K562 (cell line): ENCODE measurements at regions of chr22 and their contacts with region 1.

Region 1: GRCh38 chr22:38569972-38570778 is at the start of gene DMC1:
- DNase-seq: peak; percentile 94 to 99 (median 98)
- ATAC-seq: peak; percentile 94
- H3K4me3 ChIP-seq: peak within 1 kb of the TSS; percentile 51
- H3K27ac ChIP-seq: peak within 1 kb of the TSS; percentile 94
- H3K4me1 ChIP-seq: peaks cover 4 to 8% of the 10 kb centered on the region in 2 experiments; a peak in 4 of 5 replicates
- H3K27me3 ChIP-seq: no peaks in the 10 kb centered on the region
- CTCF ChIP-seq: no peak
- EP300 ChIP-seq: no peak
- POLR2A ChIP-seq: peak; percentile 81
- RAD21 ChIP-seq: no peak
- polyA plus RNA-seq, gene DMC1: 8.4 to 8.7 TPM

Region 2: DNA sequence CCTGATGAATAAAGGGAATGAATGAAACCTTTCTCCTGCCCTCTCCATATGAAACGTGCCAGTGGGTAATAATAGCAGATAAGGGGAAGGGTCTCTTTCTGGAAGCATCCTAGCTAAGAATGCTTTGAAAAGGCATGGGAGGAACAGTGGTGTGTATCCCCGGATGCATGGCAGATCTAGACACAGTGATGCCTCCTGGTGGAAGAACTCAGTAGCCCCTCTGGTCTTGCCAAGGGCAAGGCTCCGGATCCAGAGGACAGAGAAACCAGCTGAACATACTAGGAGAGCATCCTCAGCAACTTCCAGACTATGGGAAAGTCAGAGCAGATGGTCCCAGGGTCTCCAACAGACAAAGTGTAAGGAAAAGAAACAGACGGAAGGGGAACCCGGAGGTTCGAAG is 466.1 kb before region 1 on chr22:
- CTCF ChIA-PET with region 1: no interaction called
- POLR2A ChIA-PET with region 1: no interaction called
- in situ Hi-C with region 1: loop called (anchors 10 kb)
- intact Hi-C with region 1: loop called (anchors 10 kb)
- DNase-seq: peak; percentile 43 to 50 (median 46)
- ATAC-seq: peak; percentile 86
- H3K4me3 ChIP-seq: no peak overlapping the region
- H3K27ac ChIP-seq: no peak overlapping the region
- H3K4me1 ChIP-seq: peaks cover 0 to 9% of the 10 kb centered on the region in 2 experiments; a peak in 4 of 5 replicates
- H3K27me3 ChIP-seq: no peaks in the 10 kb centered on the region
- CTCF ChIP-seq: peak; percentile 45 to 54 (median 48)
- EP300 ChIP-seq: no peak
- POLR2A ChIP-seq: no peak
- RAD21 ChIP-seq: peak in 1 of 2 experiments; percentile 40; a peak in 2 of 4 replicates

Region 3: GRCh38 chr22:38143036-38143697 is 427.0 kb before region 1 on chr22:
- CTCF ChIA-PET with region 1: no interaction called
- POLR2A ChIA-PET with region 1: no interaction called
- in situ Hi-C with region 1: no loop called
- intact Hi-C with region 1: no loop called
- DNase-seq: peak in 2 of 4 experiments; percentile 72 to 83
- ATAC-seq: peak; percentile 85
- H3K4me3 ChIP-seq: no peak overlapping the region
- H3K27ac ChIP-seq: peak overlapping the region; percentile 66
- H3K4me1 ChIP-seq: peaks cover 26 to 32% of the 10 kb centered on the region in 2 experiments; a peak in 4 of 5 replicates
- H3K27me3 ChIP-seq: no peaks in the 10 kb centered on the region
- CTCF ChIP-seq: no peak
- EP300 ChIP-seq: peak; percentile 85
- POLR2A ChIP-seq: no peak
- RAD21 ChIP-seq: no peak; a peak in 1 of 4 replicates

Region 4: DNA sequence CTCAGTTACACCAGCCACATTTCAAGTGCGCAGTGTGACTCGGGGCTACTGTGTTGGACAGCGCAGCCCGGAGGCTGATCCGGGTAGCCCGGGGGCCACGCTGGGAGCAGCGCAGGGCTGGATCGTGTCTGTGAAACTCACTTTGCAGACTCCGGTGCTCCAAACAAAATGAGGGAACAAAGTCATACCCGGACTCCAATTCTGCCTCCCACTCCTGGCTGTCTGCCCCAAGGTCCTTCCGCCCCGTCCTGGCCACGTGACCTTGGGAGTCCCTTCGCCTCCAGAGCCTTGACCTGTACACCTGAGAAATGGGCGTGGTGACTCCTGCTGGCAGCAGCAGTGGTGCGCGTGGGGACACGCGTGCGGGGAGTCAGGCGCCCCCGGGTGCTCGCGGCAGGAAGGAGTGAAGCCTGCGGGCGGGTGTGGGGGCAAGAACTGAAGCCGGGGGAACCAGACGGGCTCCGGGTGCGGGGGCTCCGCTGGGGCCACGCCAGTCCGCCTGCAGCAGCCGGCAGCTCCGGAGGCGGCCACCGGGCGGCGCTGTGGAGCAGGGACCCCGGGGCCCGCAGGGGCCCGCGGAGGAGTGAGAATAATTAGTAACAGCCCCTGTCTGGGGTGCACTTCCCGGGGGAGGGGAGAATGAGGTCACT is 157.6 kb before region 1 on chr22:
- CTCF ChIA-PET with region 1: no interaction called
- POLR2A ChIA-PET with region 1: no interaction called
- in situ Hi-C with region 1: no loop called
- intact Hi-C with region 1: loop called (anchors 5 kb)
- DNase-seq: peak; percentile 50 to 84 (median 83)
- ATAC-seq: peak; percentile 93
- H3K4me3 ChIP-seq: peak overlapping the region; percentile 27
- H3K27ac ChIP-seq: no peak overlapping the region
- H3K4me1 ChIP-seq: peaks cover 0 to 15% of the 10 kb centered on the region in 2 experiments; a peak in 2 of 5 replicates
- H3K27me3 ChIP-seq: no peaks in the 10 kb centered on the region
- CTCF ChIP-seq: peak; percentile 66 to 81 (median 79)
- EP300 ChIP-seq: no peak
- POLR2A ChIP-seq: no peak
- RAD21 ChIP-seq: peak in 1 of 2 experiments; percentile 61; a peak in 3 of 4 replicates

Region 5: GRCh38 chr22:38490915-38491314 is 79.3 kb before region 1 on chr22:
- CTCF ChIA-PET with region 1: no interaction called
- POLR2A ChIA-PET with region 1: no interaction called
- in situ Hi-C with region 1: loop called (anchors 5 kb)
- intact Hi-C with region 1: no loop called
- DNase-seq: no peak
- ATAC-seq: peak; percentile 63
- H3K4me3 ChIP-seq: no peak overlapping the region
- H3K27ac ChIP-seq: peak overlapping the region; percentile 53; the same call in 1 of the 3 replicates
- H3K4me1 ChIP-seq: no peaks in the 10 kb centered on the region
- H3K27me3 ChIP-seq: no peaks in the 10 kb centered on the region
- CTCF ChIP-seq: no peak
- EP300 ChIP-seq: no peak
- POLR2A ChIP-seq: no peak
- RAD21 ChIP-seq: no peak

Region 6: DNA sequence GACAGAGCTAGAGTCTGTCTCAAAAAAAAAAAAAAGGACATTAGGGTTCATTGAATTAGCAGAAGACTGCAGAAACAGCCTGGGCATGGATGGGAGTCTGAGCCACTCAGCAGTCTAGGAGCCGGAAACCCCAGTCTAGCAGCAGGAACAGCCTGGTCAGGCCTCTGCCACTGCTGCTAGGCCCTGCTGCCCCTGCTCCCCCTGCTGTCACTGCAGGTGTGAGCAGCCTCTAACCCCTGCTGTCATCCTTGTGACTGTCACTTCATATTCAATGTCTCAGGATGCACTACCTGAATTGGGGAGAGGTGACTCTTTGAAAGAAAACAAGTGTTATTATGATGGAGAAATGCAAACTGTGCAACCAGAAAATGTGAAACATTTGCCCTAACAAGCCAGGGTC is 57.1 kb before region 1 on chr22:
- CTCF ChIA-PET with region 1: interaction called, 5 read pairs
- POLR2A ChIA-PET with region 1: no interaction called
- in situ Hi-C with region 1: no loop called
- intact Hi-C with region 1: loop called (anchors 5 kb)
- DNase-seq: peak; percentile 29 to 63 (median 46)
- ATAC-seq: peak; percentile 89
- H3K4me3 ChIP-seq: no peak overlapping the region
- H3K27ac ChIP-seq: no peak overlapping the region; the same call in 2 of the 3 replicates
- H3K4me1 ChIP-seq: peaks cover 21 to 35% of the 10 kb centered on the region in 2 experiments; a peak in 4 of 5 replicates
- H3K27me3 ChIP-seq: no peaks in the 10 kb centered on the region
- CTCF ChIP-seq: peak; percentile 45 to 64 (median 61)
- EP300 ChIP-seq: no peak
- POLR2A ChIP-seq: no peak
- RAD21 ChIP-seq: peak in 1 of 2 experiments; percentile 38; a peak in 2 of 4 replicates

Region 7: GRCh38 chr22:38549495-38549894 is 20.7 kb before region 1 on chr22:
- CTCF ChIA-PET with region 1: no interaction called
- POLR2A ChIA-PET with region 1: no interaction called
- in situ Hi-C with region 1: no loop called
- intact Hi-C with region 1: no loop called
- DNase-seq: no peak
- ATAC-seq: no peak
- H3K4me3 ChIP-seq: no peak overlapping the region
- H3K27ac ChIP-seq: no peak overlapping the region
- H3K4me1 ChIP-seq: no peaks in the 10 kb centered on the region
- H3K27me3 ChIP-seq: no peaks in the 10 kb centered on the region
- CTCF ChIP-seq: no peak
- EP300 ChIP-seq: no peak
- POLR2A ChIP-seq: no peak
- RAD21 ChIP-seq: no peak

Region 8: DNA sequence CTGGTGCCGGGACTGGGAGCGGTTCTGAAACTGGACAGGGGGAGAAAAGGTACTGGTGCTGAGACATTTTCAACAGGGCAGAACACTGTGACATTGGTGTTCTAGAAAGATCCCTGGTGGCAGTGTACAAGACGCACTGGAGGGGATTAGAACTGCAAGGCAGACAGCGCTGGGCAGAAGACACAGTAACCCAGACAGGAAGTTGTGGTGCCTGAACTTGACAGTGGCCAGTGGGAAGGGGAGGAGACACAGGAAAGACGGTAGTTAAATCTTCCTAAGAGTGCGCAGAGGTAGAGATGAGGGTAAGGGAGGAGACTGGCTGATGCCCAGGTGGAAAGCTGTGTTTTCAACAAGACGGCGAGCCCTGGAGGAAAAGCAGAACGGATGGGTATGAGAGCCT is 61.5 kb after region 1 on chr22:
- CTCF ChIA-PET with region 1: no interaction called
- POLR2A ChIA-PET with region 1: no interaction called
- in situ Hi-C with region 1: no loop called
- intact Hi-C with region 1: no loop called
- DNase-seq: no peak
- ATAC-seq: no peak
- H3K4me3 ChIP-seq: no peak overlapping the region
- H3K27ac ChIP-seq: no peak overlapping the region
- H3K4me1 ChIP-seq: no peaks in the 10 kb centered on the region; a peak in 2 of 5 replicates
- H3K27me3 ChIP-seq: no peaks in the 10 kb centered on the region
- CTCF ChIP-seq: no peak
- EP300 ChIP-seq: no peak
- POLR2A ChIP-seq: no peak
- RAD21 ChIP-seq: no peak